Mammary epithelial cell (primary cell): ENCODE measurements at regions of chr4 and their contacts with region 1.

Region 1: GRCh38 chr4:122403861-122404260 is 25.1 kb downstream of the ADAD1 start:
- DNase-seq: no peak
- H3K4me3 ChIP-seq: no peak overlapping the region
- H3K27ac ChIP-seq: no peak overlapping the region
- H3K4me1 ChIP-seq: no peaks in the 10 kb centered on the region
- H3K27me3 ChIP-seq: peaks cover 2% of the 10 kb centered on the region
- CTCF ChIP-seq: no peak

Region 2: DNA sequence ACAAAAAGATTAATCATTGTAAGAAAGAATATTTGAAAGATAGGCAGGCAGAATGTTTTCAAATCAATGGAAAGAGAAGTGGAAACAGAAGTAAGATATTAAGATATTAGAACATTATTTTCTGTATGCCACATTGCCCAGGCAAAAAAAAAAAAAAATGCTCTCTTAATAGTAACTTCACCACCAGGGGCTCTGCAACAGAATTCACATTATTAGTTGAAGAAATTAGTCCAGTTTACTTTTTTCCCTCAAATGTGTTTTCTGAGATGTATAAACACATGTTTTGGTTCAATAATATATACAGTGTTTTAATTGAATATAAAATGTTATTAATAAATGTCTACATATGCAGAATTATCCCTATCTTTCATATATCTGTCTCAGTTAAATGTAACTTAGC is 103.1 kb before region 1 on chr4:
- CTCF ChIA-PET with region 1: no interaction called
- dilution Hi-C with region 1: no loop called
- in situ Hi-C with region 1: no loop called
- intact Hi-C with region 1: no loop called
- DNase-seq: no peak
- H3K4me3 ChIP-seq: no peak overlapping the region
- H3K27ac ChIP-seq: no peak overlapping the region
- H3K4me1 ChIP-seq: no peaks in the 10 kb centered on the region
- H3K27me3 ChIP-seq: no peaks in the 10 kb centered on the region
- CTCF ChIP-seq: peak in 1 of 2 donors; percentile 17

Region 3: GRCh38 chr4:122423246-122423645 is 19.4 kb after region 1 on chr4:
- CTCF ChIA-PET with region 1: no interaction called
- dilution Hi-C with region 1: no loop called
- in situ Hi-C with region 1: no loop called
- intact Hi-C with region 1: loop called (anchors 1 kb)
- DNase-seq: no peak
- H3K4me3 ChIP-seq: no peak overlapping the region
- H3K27ac ChIP-seq: no peak overlapping the region
- H3K4me1 ChIP-seq: no peaks in the 10 kb centered on the region
- H3K27me3 ChIP-seq: no peaks in the 10 kb centered on the region
- CTCF ChIP-seq: no peak